MCF 10A (cell line): ENCODE measurements at regions of chr16 and their contacts with region 1.

Region 1: GRCh38 chr16:57648590-57649442 is 19.3 kb upstream of the ADGRG3 start:
- DNase-seq: peak; percentile 85
- H3K4me3 Mint-ChIP-seq: no peak overlapping the region
- H3K27ac Mint-ChIP-seq: no peak overlapping the region
- H3K4me1 Mint-ChIP-seq: no peaks in the 10 kb centered on the region
- H3K27me3 Mint-ChIP-seq: no peaks in the 10 kb centered on the region
- CTCF ChIP-seq: peak; percentile 100

Region 2: DNA sequence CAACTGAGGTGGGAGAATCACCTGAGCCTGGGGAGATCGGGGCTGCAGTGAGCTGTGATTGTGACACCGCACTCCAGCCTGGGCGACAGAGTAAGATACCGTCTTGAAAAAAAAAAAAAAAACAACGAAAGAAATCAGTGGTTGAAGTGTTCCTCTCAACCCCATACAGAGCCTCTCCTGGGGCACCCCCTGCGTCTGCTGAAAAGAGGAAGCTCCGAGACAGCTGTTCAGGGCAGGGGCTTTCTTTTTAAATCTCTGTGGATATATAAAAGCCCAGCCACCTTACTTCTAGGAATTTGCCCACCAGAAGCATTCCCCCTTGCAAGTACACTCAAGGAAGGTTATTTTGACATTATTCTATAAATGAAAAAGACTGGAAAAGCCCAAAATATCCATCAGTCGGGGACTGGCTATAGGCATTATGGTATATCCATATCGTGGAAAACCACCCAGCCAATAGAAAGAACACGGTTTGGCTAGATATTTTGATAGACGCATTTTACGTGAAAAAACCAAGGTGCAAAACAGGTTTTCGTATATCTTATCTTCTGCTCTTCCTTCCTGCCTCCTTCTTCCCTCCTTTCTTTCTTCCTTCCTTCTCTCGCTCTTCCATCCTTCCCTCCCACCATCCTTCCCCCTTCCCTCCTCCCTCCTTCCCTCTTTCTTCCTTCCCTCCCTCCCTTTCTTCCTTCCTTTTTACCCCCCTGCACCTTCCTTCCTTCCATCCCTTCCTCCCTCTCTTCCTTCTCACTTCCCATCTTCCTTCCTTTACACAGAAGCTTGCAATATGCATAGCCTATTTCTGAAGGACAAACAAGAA is 299.4 kb before region 1 on chr16:
- CTCF ChIA-PET with region 1: no interaction called
- POLR2A ChIA-PET with region 1: no interaction called
- intact Hi-C with region 1: no loop called
- DNase-seq: no peak
- H3K4me3 Mint-ChIP-seq: no peak overlapping the region
- H3K27ac Mint-ChIP-seq: no peak overlapping the region
- H3K4me1 Mint-ChIP-seq: no peaks in the 10 kb centered on the region
- H3K27me3 Mint-ChIP-seq: peaks cover 33% of the 10 kb centered on the region
- CTCF ChIP-seq: no peak

Region 3: GRCh38 chr16:57576429-57576870 is 72.4 kb before region 1 on chr16:
- CTCF ChIA-PET with region 1: interaction called, 56 read pairs
- POLR2A ChIA-PET with region 1: interaction called, 4 read pairs
- intact Hi-C with region 1: loop called (anchors 1 kb)
- DNase-seq: peak; percentile 73
- H3K4me3 Mint-ChIP-seq: no peak overlapping the region
- H3K27ac Mint-ChIP-seq: no peak overlapping the region
- H3K4me1 Mint-ChIP-seq: no peaks in the 10 kb centered on the region
- H3K27me3 Mint-ChIP-seq: peaks cover 23% of the 10 kb centered on the region
- CTCF ChIP-seq: peak; percentile 97

Region 4: DNA sequence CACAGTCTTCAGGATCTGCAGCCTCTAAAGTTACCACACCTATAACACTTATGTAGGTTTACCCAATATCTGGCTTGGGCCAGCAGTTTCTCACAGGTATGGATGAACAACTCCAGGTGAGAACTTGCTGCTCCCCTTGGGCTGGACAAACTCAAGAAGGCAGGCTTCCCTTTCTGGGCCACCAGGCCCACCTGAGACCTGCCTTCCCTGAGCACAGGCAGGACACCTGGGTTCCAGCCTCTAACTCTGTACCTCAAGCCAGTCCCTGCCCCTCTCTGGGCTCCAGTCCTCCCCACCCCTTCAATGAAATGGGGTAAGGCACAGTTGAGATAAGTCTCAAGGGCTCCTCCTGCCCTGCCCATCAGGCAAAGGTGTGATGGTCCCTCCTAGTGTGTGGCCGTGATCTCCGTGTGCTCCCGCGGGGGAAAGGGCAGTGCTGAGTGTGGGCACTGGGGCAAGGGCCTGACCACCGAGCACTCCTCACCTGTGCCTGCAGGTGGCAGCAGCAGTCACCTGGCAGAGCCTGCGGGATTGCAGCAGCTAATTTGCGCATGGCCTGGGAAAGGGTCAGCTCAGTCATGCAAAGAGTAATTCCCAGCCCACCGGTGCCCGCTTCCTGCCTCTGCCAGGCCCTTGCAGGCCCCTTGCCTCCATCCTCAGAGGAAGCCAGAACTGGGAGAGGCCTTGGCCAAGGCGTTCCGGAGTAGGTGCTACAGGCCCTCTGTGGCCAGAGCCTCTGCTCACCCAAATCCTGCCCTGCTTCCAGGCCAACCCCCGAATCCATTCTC is 48.6 kb before region 1 on chr16:
- CTCF ChIA-PET with region 1: interaction called, 141 read pairs
- POLR2A ChIA-PET with region 1: no interaction called
- intact Hi-C with region 1: loop called (anchors 1 kb)
- DNase-seq: peak; percentile 70
- H3K4me3 Mint-ChIP-seq: no peak overlapping the region
- H3K27ac Mint-ChIP-seq: no peak overlapping the region
- H3K4me1 Mint-ChIP-seq: no peaks in the 10 kb centered on the region
- H3K27me3 Mint-ChIP-seq: peaks cover 14% of the 10 kb centered on the region
- CTCF ChIP-seq: peak; percentile 73

Region 5: GRCh38 chr16:57628008-57628781 is 20.6 kb before region 1 on chr16 and contains the start of gene ADGRG1:
- CTCF ChIA-PET with region 1: interaction called, 99 read pairs
- POLR2A ChIA-PET with region 1: interaction called, 4 read pairs
- intact Hi-C with region 1: no loop called
- DNase-seq: peak; percentile 96
- H3K4me3 Mint-ChIP-seq: no peak within 1 kb of the TSS
- H3K27ac Mint-ChIP-seq: no peak within 1 kb of the TSS
- H3K4me1 Mint-ChIP-seq: peaks cover 39% of the 10 kb centered on the region
- H3K27me3 Mint-ChIP-seq: no peaks in the 10 kb centered on the region
- CTCF ChIP-seq: no peak
- total RNA-seq, gene ADGRG1: 10.1 and 10.2 TPM in 2 replicates

Region 6: GRCh38 chr16:57720142-57720575 is 71.3 kb after region 1 on chr16:
- CTCF ChIA-PET with region 1: interaction called, 4 read pairs
- POLR2A ChIA-PET with region 1: no interaction called
- intact Hi-C with region 1: loop called (anchors 2 kb)
- DNase-seq: peak; percentile 69
- H3K4me3 Mint-ChIP-seq: no peak overlapping the region
- H3K27ac Mint-ChIP-seq: no peak overlapping the region
- H3K4me1 Mint-ChIP-seq: no peaks in the 10 kb centered on the region
- H3K27me3 Mint-ChIP-seq: peaks cover 1% of the 10 kb centered on the region
- CTCF ChIP-seq: peak; percentile 64